Endothelial cell of umbilical vein (primary cell): ENCODE measurements at regions of chr1 and their contacts with region 1.

Region 1: DNA sequence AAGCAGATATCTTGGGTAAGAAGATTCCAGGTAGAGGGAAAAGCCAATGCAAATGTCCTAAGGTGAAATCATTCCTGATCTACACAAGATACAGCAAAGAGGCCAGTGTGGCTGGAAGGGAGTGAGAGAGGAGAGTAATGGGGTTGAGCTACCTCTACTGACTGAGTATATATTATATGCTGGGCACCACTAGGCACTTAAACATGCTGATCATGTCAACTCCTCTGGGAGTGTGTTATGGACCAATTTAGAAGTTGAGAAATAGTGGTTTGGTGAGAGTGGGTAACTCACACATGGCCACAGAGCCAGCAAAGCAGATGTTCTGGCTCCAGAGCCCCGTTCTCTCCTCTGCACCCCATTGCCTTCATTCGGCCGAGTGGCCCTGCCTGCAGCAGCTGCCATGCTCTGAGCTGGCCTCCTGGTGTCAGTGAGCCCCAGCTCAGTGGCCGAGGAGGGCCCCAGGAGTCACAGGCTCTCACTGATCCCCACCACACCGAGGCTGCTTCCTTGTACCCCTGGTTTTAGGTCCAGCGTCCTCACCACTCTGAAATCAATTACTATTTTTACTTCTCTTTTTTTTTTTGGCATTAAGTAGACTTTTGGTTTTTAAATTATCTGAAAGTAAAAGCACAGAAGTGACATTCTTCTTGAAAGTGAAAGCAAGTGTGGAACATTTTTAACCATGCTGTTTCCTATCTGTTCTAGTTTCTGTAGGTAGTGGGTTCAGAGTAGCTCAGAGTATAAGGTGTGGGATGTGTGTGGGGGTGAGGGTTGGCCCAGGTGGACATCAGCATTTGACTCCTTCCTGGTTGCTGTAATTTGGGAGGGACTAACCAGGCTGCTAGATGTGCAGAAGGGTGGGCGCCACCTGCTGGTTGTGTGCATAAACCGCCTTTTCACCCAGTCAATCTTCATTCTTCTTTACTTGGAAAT is 45.8 kb upstream of the CRNN start:
- DNase-seq: peak; percentile 63
- H3K4me3 ChIP-seq: no peak overlapping the region
- H3K27ac ChIP-seq: no peak overlapping the region
- H3K4me1 ChIP-seq: no peaks in the 10 kb centered on the region
- H3K27me3 ChIP-seq: peaks cover 0 to 4% of the 10 kb centered on the region in 2 experiments
- CTCF ChIP-seq: peak; percentile 88 to 91
- POLR2A ChIP-seq: no peak

Region 2: GRCh38 chr1:152141974-152142584 is 317.8 kb before region 1 on chr1:
- CTCF ChIA-PET with region 1: interaction called, 34 read pairs
- POLR2A ChIA-PET with region 1: no interaction called
- dilution Hi-C with region 1: no loop called
- intact Hi-C with region 1: loop called (anchors 1 kb)
- DNase-seq: peak; percentile 57
- H3K4me3 ChIP-seq: no peak overlapping the region
- H3K27ac ChIP-seq: no peak overlapping the region
- H3K4me1 ChIP-seq: no peaks in the 10 kb centered on the region
- H3K27me3 ChIP-seq: no peaks in the 10 kb centered on the region
- CTCF ChIP-seq: peak; percentile 63 to 65
- POLR2A ChIP-seq: no peak

Region 3: DNA sequence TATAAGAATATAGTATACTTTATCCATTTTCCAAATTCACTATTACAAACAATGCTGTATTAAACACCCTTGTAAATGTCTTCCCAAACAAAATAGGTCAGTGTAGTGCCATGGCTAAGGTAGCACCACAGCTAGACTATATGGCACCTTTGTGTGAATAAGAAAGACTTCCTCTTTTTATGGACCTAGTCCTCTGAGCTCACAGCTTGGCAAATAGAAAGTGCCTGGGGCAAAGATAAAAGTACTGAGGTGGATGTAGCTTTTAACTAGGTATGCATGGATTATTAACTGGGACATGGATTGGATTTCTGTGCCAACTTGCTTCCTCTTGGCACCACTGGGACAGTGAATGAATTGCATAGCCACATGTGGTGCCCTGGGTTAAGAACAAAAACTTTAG is 260.9 kb before region 1 on chr1:
- CTCF ChIA-PET with region 1: interaction called, 56 read pairs
- POLR2A ChIA-PET with region 1: no interaction called
- dilution Hi-C with region 1: no loop called
- intact Hi-C with region 1: no loop called
- DNase-seq: no peak
- H3K4me3 ChIP-seq: no peak overlapping the region
- H3K27ac ChIP-seq: no peak overlapping the region
- H3K4me1 ChIP-seq: no peaks in the 10 kb centered on the region
- H3K27me3 ChIP-seq: no peaks in the 10 kb centered on the region
- CTCF ChIP-seq: no peak
- POLR2A ChIP-seq: no peak

Region 4: GRCh38 chr1:152408667-152409165 is 51.1 kb before region 1 on chr1:
- CTCF ChIA-PET with region 1: interaction called, 11 read pairs
- POLR2A ChIA-PET with region 1: no interaction called
- dilution Hi-C with region 1: no loop called
- intact Hi-C with region 1: no loop called
- DNase-seq: no peak
- H3K4me3 ChIP-seq: no peak overlapping the region
- H3K27ac ChIP-seq: no peak overlapping the region
- H3K4me1 ChIP-seq: no peaks in the 10 kb centered on the region
- H3K27me3 ChIP-seq: no peaks in the 10 kb centered on the region
- CTCF ChIP-seq: no peak
- POLR2A ChIP-seq: no peak

Region 5: GRCh38 chr1:152448095-152448494 is 11.8 kb before region 1 on chr1:
- CTCF ChIA-PET with region 1: interaction called, 76 read pairs
- POLR2A ChIA-PET with region 1: no interaction called
- dilution Hi-C with region 1: no loop called
- intact Hi-C with region 1: no loop called
- DNase-seq: no peak
- H3K4me3 ChIP-seq: no peak overlapping the region
- H3K27ac ChIP-seq: no peak overlapping the region
- H3K4me1 ChIP-seq: no peaks in the 10 kb centered on the region
- H3K27me3 ChIP-seq: peaks cover 0 to 2% of the 10 kb centered on the region in 2 experiments
- CTCF ChIP-seq: no peak
- POLR2A ChIP-seq: no peak

Region 6: DNA sequence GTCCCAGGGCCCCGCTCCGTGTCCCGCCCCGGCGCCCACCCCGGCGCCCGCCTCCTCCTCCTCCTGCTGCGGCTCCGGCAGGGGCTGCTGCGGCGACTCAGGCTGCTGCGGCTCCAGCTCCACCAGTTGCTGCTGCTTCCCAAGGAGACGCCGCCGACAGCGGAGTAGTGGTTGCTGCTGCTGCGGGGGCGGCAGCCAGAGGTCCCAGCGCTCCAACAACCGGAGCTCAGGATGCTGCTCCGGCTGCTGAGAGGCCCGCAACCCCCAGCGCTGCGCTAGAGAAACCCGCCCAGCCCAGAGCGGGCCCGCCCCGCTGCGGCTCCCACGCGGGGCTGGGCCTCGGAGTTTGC is 55.5 kb after region 1 on chr1:
- CTCF ChIA-PET with region 1: interaction called, 10 read pairs
- POLR2A ChIA-PET with region 1: no interaction called
- dilution Hi-C with region 1: no loop called
- intact Hi-C with region 1: no loop called
- DNase-seq: no peak
- H3K4me3 ChIP-seq: no peak overlapping the region
- H3K27ac ChIP-seq: no peak overlapping the region
- H3K4me1 ChIP-seq: peaks cover 4% of the 10 kb centered on the region
- H3K27me3 ChIP-seq: peaks cover 15 to 16% of the 10 kb centered on the region in 2 experiments
- CTCF ChIP-seq: no peak
- POLR2A ChIP-seq: no peak